ENCODE measurements at regions of chr1 and their contacts with region 1.

Region 1: DNA sequence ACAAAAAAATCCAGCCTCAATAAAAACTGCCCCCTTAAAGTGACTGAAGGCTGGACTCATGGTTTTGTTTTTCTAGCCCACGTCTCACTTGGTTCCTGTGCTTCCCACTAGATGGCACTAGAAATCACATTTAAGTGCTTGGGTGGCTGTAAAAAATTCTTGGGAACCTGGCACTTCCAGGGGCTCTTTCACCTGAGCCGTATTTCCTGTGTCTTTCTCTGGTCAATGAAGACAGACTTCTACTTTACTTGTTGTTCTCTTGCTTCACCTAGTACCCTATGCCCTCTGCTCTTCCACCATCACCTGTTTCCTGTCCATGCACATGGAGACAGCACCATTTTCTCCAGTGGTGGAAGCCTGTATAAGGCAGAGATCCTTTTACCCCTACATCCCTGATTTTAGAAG is 20.0 kb downstream of the METTL13 start:
- DNase-seq: peak; percentile 36
- ATAC-seq: peak; percentile 59; the same call in 1 of the 2 replicates
- H3K4me3 ChIP-seq: no peak overlapping the region
- H3K27ac ChIP-seq: peak overlapping the region; percentile 40; the same call in 1 of the 2 replicates
- H3K4me1 ChIP-seq: no peaks in the 10 kb centered on the region
- H3K27me3 ChIP-seq: no peaks in the 10 kb centered on the region
- CTCF ChIP-seq: peak; percentile 85

Region 2: GRCh38 chr1:171754353-171754705 is 47.2 kb before region 1 on chr1:
- CTCF ChIA-PET with region 1: interaction called, 27 read pairs
- POLR2A ChIA-PET with region 1: no interaction called
- in situ Hi-C with region 1: no loop called
- intact Hi-C with region 1: no loop called
- DNase-seq: no peak
- ATAC-seq: no peak
- H3K4me3 ChIP-seq: no peak overlapping the region
- H3K27ac ChIP-seq: no peak overlapping the region
- H3K4me1 ChIP-seq: no peaks in the 10 kb centered on the region
- H3K27me3 ChIP-seq: no peaks in the 10 kb centered on the region
- CTCF ChIP-seq: no peak

Region 3: DNA sequence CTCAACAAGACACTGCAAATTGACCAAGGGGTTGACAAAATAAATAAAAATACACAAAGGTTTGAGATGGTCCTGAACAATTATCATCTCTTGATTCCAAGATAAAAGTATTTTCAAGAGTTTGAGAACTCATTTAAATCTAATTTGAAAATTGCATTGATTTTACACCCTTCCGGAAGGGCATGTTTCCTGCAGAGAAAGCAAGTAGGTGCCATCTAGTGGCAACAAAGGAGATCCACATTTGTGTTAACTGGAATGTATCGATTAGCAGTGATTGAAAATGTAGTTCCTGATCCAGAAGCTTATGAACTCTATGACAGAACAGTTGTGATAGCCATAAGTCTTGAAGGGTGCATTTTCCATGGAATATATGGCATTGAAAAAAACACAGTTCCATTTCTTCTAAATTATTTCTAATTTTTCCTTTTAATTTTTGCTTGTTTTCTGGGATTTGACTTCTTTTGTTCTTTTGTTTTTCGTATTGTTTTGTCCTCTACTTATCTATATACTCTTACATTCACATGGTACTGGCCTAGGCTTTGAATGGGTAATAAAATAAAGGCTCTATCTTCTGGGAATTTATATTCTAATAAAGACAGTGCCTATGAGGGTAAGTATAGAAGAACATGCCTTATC is 183.5 kb after region 1 on chr1:
- CTCF ChIA-PET with region 1: interaction called, 24 read pairs
- POLR2A ChIA-PET with region 1: interaction called, 4 read pairs
- in situ Hi-C with region 1: no loop called
- intact Hi-C with region 1: loop called (anchors 1 kb)
- DNase-seq: no peak
- ATAC-seq: peak; percentile 68; the same call in 1 of the 2 replicates
- H3K4me3 ChIP-seq: no peak overlapping the region
- H3K27ac ChIP-seq: peak overlapping the region; percentile 32; the same call in 1 of the 2 replicates
- H3K4me1 ChIP-seq: 0 out of 2 replicates have a peak, but pooled peaks cover 6% of the 10 kb centered on the region
- H3K27me3 ChIP-seq: no peaks in the 10 kb centered on the region
- CTCF ChIP-seq: peak; percentile 73; the same call in 1 of the 2 replicates